Endothelial cell of umbilical vein (primary cell): ENCODE measurements at regions of chr10 and their contacts with region 1.

Region 1: DNA sequence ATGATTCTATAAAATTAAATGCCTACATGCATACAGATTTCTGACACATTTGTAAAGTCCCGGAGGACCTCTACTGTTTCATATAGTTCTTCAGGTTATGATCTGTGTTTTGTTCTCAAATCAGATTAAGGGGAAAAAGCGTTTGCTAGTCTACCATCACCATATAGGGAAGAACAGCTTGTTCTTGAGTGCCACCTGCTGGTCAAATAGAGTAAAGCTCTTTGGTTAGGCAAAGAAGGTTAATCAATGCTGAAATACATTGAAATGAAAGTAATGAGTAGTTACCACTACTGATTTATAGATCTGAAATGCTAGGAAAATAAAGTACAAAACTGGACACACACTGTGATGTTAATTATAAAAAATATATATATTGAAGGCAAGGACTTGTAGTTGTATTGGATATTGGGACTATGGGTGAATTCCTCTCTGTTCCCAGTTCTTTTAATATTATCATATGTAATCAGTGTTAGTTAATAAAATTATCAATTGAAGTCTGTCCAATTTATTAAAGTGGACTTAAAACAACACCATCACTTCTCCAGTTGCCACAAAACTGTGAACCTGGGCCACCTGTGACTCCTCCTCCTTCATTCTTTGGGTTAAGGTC is 72.6 kb upstream of the PDLIM1 start:
- DNase-seq: peak; percentile 71
- H3K4me3 ChIP-seq: no peak overlapping the region
- H3K27ac ChIP-seq: no peak overlapping the region
- H3K4me1 ChIP-seq: peaks cover 11% of the 10 kb centered on the region
- H3K27me3 ChIP-seq: no peaks in the 10 kb centered on the region
- CTCF ChIP-seq: peak; percentile 58 to 69
- POLR2A ChIP-seq: no peak

Region 2: DNA sequence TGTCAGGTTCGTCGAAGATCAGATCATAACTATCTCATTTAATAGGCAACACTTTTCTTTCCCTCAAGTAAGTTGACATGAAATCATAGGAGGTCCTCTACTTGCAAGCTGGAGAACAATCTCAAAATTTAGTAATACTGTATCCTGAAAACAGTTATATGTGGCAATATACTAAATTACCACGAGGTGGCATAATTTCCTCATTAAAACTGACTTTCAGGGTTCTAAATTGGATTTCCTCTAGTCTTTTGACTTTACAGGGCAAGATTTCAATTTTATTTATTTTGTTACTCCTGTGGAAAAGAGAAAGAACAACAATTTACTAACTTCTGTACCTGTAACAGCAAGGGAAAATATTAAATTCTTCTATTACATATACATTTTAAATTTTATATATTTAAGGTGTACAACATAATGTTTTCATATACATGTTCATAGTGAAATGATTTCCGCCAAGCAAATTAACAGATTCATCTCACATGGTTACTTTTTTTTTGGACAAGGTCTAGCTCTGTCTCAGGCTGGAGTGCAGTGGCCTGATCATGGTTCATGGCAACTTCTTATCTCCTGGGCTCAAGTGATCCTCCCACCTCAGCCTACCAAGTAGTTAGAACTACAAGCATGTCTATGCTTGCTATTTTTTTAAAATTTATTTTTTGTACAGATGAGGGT is 733.3 kb before region 1 on chr10:
- CTCF ChIA-PET with region 1: no interaction called
- POLR2A ChIA-PET with region 1: no interaction called
- dilution Hi-C with region 1: no loop called
- intact Hi-C with region 1: loop called (anchors 2 kb)
- DNase-seq: peak; percentile 44
- H3K4me3 ChIP-seq: no peak overlapping the region
- H3K27ac ChIP-seq: no peak overlapping the region
- H3K4me1 ChIP-seq: no peaks in the 10 kb centered on the region
- H3K27me3 ChIP-seq: peaks cover 0 to 4% of the 10 kb centered on the region in 2 experiments
- CTCF ChIP-seq: peak; percentile 18 to 39
- POLR2A ChIP-seq: no peak

Region 3: GRCh38 chr10:95201736-95202135 is 161.7 kb before region 1 on chr10:
- CTCF ChIA-PET with region 1: interaction called, 53 read pairs
- POLR2A ChIA-PET with region 1: no interaction called
- dilution Hi-C with region 1: no loop called
- intact Hi-C with region 1: no loop called
- DNase-seq: no peak
- H3K4me3 ChIP-seq: no peak overlapping the region
- H3K27ac ChIP-seq: no peak overlapping the region
- H3K4me1 ChIP-seq: no peaks in the 10 kb centered on the region
- H3K27me3 ChIP-seq: peaks cover 0 to 1% of the 10 kb centered on the region in 2 experiments
- CTCF ChIP-seq: peak in 1 of 2 donors; percentile 7
- POLR2A ChIP-seq: no peak

Region 4: GRCh38 chr10:95246579-95247051 is 116.8 kb before region 1 on chr10:
- CTCF ChIA-PET with region 1: interaction called, 492 read pairs
- POLR2A ChIA-PET with region 1: interaction called, 4 read pairs
- dilution Hi-C with region 1: no loop called
- intact Hi-C with region 1: loop called (anchors 1 kb)
- DNase-seq: peak; percentile 76
- H3K4me3 ChIP-seq: no peak overlapping the region
- H3K27ac ChIP-seq: no peak overlapping the region
- H3K4me1 ChIP-seq: peaks cover 11% of the 10 kb centered on the region
- H3K27me3 ChIP-seq: no peaks in the 10 kb centered on the region
- CTCF ChIP-seq: peak; percentile 75 to 79
- POLR2A ChIP-seq: no peak

Region 5: GRCh38 chr10:95290461-95291364 is 72.7 kb before region 1 on chr10 and contains the start of gene PDLIM1:
- CTCF ChIA-PET with region 1: interaction called, 18 read pairs
- POLR2A ChIA-PET with region 1: no interaction called
- dilution Hi-C with region 1: no loop called
- intact Hi-C with region 1: loop called (anchors 2 kb)
- DNase-seq: peak; percentile 58
- H3K4me3 ChIP-seq: peak within 1 kb of the TSS; percentile 61 to 91 (median 70)
- H3K27ac ChIP-seq: peak within 1 kb of the TSS; percentile 44
- H3K4me1 ChIP-seq: peaks cover 35% of the 10 kb centered on the region
- H3K27me3 ChIP-seq: no peaks in the 10 kb centered on the region
- CTCF ChIP-seq: peak in 1 of 2 donors; percentile 30
- POLR2A ChIP-seq: peak; percentile 57
- total RNA-seq, gene PDLIM1: 70.4 and 122 TPM in 2 replicates

Region 6: DNA sequence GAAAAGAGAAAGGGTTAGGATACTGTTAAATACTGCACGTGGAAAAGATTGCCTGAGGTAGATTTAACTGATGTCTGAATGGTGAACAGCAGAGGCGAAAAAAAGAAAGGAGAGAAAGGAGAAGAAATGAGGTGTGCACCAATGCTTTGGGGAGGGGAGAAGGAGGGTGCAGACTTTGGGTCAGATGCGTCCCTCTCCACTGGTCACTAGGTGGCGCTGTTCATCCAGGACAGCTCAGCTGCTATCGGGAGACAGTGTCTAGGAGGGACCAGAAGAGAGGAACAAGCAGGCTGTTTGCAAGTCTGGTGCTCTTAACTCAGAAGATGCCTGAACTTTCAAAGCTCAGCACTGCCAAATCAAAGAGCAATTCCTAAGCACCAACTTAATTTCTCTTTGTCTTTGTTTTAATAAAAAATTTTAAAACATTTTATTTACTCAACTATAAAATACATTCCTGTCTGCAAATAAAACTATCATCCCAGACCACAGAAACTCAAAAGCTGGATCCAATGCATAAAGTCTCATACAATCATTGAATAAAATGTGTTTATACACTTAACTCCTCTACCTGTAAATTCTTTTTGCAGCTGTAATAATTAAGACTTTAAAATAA is 11.3 kb after region 1 on chr10:
- CTCF ChIA-PET with region 1: interaction called, 37 read pairs
- POLR2A ChIA-PET with region 1: no interaction called
- dilution Hi-C with region 1: no loop called
- intact Hi-C with region 1: no loop called
- DNase-seq: peak; percentile 50
- H3K4me3 ChIP-seq: no peak overlapping the region
- H3K27ac ChIP-seq: no peak overlapping the region
- H3K4me1 ChIP-seq: no peaks in the 10 kb centered on the region
- H3K27me3 ChIP-seq: peaks cover 0 to 7% of the 10 kb centered on the region in 2 experiments
- CTCF ChIP-seq: peak; percentile 83 to 91
- POLR2A ChIP-seq: no peak

Region 7: GRCh38 chr10:95513941-95514392 is 150.6 kb after region 1 on chr10:
- CTCF ChIA-PET with region 1: no interaction called
- POLR2A ChIA-PET with region 1: no interaction called
- dilution Hi-C with region 1: no loop called
- intact Hi-C with region 1: no loop called
- DNase-seq: peak; percentile 69
- H3K4me3 ChIP-seq: no peak overlapping the region
- H3K27ac ChIP-seq: peak overlapping the region; percentile 50
- H3K4me1 ChIP-seq: peaks cover 56% of the 10 kb centered on the region
- H3K27me3 ChIP-seq: no peaks in the 10 kb centered on the region
- CTCF ChIP-seq: no peak
- POLR2A ChIP-seq: no peak

Region 8: DNA sequence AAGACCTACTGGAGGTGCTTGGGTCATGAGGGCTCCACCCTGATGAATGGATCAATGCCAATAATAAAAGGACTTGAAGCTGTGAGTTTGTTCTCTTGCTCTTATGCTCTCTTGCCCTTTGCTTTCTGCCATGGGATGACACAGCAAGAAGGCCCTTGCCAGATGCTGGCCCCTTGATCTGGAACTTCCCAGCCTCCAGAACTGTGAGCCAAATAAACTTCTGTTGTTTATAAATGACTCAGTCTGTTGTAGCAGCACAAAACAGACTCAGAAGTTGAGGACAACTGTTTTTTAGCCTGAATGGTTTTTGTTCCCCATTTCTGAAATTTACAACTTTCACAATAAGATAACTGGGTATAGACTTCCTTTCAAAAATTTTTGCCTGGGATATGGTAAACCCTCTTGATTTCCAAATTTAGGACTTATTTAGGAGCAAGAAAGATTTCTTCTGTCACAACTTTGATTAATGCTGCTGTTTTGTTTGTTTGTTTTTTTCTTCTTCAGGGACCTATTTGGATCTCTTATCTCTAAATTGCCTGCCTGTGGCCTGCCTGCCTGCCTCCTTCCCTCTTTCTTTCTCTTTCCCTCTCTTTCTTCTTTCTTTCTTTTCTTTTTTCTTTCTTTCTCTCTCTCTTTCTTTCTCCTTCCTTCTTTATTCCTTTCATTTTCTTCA is 404.6 kb after region 1 on chr10:
- CTCF ChIA-PET with region 1: no interaction called
- POLR2A ChIA-PET with region 1: no interaction called
- dilution Hi-C with region 1: no loop called
- intact Hi-C with region 1: no loop called
- DNase-seq: peak; percentile 70
- H3K4me3 ChIP-seq: no peak overlapping the region
- H3K27ac ChIP-seq: no peak overlapping the region
- H3K4me1 ChIP-seq: peaks cover under 1% of the 10 kb centered on the region
- H3K27me3 ChIP-seq: no peaks in the 10 kb centered on the region
- CTCF ChIP-seq: no peak
- POLR2A ChIP-seq: no peak

Region 9: GRCh38 chr10:95850791-95851190 is 487.4 kb after region 1 on chr10:
- CTCF ChIA-PET with region 1: no interaction called
- POLR2A ChIA-PET with region 1: no interaction called
- dilution Hi-C with region 1: no loop called
- intact Hi-C with region 1: no loop called
- DNase-seq: no peak
- H3K4me3 ChIP-seq: no peak overlapping the region
- H3K27ac ChIP-seq: no peak overlapping the region
- H3K4me1 ChIP-seq: no peaks in the 10 kb centered on the region
- H3K27me3 ChIP-seq: no peaks in the 10 kb centered on the region
- CTCF ChIP-seq: no peak
- POLR2A ChIP-seq: no peak